Ascending aorta (tissue), 2 donors: ENCODE measurements at regions of chr3 and their contacts with region 1.

Region 1: DNA sequence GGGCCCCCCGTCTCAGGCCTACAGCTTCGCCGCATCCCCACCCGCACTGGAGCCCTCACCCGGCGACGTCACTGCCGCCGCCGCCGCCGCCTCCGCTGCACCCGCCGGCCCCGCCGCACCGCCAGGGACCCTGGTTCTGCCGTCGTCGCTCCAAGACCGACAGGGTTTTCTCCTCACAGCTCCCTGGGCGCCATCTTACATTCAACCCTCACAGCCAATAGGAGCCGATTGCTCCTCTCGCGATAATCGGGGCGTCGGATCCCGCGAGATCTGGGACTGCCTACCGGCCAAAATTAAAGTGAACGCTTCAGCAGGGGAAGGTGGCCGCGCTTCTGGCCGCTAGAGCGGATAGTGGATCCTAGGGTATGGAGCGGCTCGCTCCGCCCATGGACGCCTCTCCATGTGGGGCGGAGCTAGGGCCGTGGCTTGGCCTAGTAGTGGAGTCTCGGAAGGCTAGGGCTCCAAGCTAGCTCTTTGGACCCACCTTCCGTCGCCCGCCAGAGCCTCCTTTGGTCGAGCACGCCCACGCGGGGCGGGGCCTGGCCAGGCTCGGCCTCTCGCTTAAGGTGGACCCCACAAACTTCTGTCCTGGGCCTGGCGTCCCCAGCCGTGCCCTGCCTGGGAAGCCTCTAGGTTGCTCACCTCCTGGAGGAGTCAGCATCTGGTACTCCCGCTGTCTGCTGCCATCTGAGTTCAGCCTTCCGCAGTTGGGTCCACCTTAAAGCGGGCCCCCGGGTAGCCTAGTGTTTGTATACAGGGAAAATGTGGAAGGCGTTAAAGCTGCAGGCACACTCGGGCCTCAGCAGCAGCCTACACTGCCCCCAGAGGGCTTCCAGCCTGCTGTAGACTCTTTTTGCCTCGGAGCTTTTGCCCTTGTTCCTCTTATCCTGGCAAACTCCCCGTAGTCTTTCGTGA is at the start of gene QRICH1:
- DNase-seq: peak; percentile 94 to 99
- H3K4me3 ChIP-seq: peak within 1 kb of the TSS; percentile 97 to 98
- H3K27ac ChIP-seq: peak within 1 kb of the TSS; percentile 94 to 97
- H3K4me1 ChIP-seq: peaks cover 0 to 26% of the 10 kb centered on the region in 2 donors
- H3K27me3 ChIP-seq: no peaks in the 10 kb centered on the region
- CTCF ChIP-seq: peak; percentile 50 to 62 (median 60)
- total RNA-seq, gene QRICH1: 129 TPM

Region 2: DNA sequence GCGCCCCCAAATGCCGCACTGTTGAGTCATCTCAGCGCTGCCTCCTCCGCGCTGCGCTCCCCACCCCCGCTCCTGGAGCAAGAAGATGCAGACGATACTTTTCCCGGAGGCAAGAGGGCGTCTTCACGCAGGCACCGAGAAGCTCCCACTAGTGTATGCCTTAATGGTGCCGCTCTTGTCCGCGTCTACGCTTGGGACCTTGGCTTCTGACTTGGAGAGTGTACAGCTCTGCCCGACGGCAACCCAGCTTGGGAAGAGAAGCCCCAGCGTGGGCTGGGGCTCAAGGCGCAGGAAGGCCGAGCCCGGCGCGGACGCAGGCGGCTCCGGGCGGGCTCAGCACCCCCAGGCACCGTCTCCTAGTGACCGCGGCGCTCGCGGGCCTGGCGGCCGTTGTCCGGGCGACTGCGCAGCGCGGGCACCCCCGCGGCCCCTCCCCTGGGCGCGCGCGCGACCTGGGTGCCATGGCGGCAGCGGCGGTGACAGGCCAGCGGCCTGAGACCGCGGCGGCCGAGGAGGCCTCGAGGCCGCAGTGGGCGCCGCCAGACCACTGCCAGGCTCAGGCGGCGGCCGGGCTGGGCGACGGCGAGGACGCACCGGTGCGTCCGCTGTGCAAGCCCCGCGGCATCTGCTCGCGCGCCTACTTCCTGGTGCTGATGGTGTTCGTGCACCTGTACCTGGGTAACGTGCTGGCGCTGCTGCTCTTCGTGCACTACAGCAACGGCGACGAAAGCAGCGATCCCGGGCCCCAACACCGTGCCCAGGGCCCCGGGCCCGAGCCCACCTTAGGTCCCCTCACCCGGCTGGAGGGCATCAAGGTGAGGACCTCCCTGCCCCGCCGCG is 104.1 kb before region 1 on chr3 and contains the start of gene P4HTM:
- intact Hi-C with region 1: loop called (anchors 2 kb)
- DNase-seq: peak; percentile 46 to 96
- H3K4me3 ChIP-seq: peak within 1 kb of the TSS; percentile 80 to 99
- H3K27ac ChIP-seq: peak within 1 kb of the TSS; percentile 92 to 97
- H3K4me1 ChIP-seq: peaks cover 10 to 26% of the 10 kb centered on the region in 2 donors
- H3K27me3 ChIP-seq: no peaks in the 10 kb centered on the region
- CTCF ChIP-seq: peak in 2 of 3 experiments; percentile 35 to 45
- total RNA-seq, gene P4HTM: 71.9 TPM

Region 3: GRCh38 chr3:49028673-49029562 is 65.2 kb before region 1 on chr3 and contains the start of gene IMPDH2:
- intact Hi-C with region 1: loop called (anchors 2 kb)
- DNase-seq: peak; percentile 68 to 96
- H3K4me3 ChIP-seq: peak within 1 kb of the TSS; percentile 59 to 76
- H3K27ac ChIP-seq: peak within 1 kb of the TSS; percentile 92 to 96
- H3K4me1 ChIP-seq: peaks cover 0 to 8% of the 10 kb centered on the region in 2 donors
- H3K27me3 ChIP-seq: no peaks in the 10 kb centered on the region
- CTCF ChIP-seq: no peak
- total RNA-seq, gene IMPDH2: 101 TPM

Region 4: DNA sequence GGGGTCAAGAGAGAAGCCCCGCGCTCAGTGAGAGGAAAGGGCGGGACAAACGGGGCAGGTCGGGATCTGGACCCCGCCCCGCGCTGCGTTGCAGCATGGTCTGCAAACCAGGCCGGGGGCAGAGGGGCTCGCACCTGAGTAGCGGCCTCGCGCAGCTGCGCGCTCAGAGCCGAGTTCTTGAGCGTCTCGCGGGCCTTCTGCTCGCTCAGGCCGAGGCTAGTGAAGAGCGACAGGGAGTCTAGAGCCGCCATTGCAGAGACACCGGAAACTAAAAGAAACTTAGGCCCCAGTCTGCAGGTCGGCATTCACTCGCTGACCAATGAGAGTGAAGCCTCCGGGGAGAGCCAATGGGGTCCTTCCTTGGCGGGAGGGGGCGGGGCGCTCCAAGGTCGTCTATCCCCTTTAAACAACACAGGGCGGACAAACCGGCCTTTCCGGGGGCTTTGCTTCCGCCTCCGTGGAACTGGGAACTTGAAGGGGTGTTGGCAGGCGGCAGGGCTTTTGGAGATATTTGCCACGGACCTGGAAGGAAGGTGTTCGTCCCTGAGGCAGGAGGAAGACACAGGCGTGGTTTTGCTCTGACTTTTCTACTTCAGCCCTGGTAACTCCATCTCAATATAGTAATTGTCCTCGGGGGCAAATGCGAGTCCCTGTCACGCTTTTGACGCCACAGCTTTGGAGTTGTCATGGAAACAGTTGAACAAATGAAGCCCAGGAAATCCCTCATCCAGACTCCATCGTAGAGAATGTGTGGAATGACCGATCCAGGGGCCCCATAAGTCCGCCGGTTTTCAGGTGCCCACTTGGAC is 10.6 kb after region 1 on chr3 and contains the start of gene QARS1:
- intact Hi-C with region 1: loop called (anchors 1 kb)
- DNase-seq: peak; percentile 85 to 96
- H3K4me3 ChIP-seq: peak within 1 kb of the TSS; percentile 91 to 99
- H3K27ac ChIP-seq: peak within 1 kb of the TSS; percentile 76 to 84
- H3K4me1 ChIP-seq: peaks cover 16 to 20% of the 10 kb centered on the region in 2 donors
- H3K27me3 ChIP-seq: no peaks in the 10 kb centered on the region
- CTCF ChIP-seq: no peak
- total RNA-seq, gene QARS1: 588 TPM

Region 5: DNA sequence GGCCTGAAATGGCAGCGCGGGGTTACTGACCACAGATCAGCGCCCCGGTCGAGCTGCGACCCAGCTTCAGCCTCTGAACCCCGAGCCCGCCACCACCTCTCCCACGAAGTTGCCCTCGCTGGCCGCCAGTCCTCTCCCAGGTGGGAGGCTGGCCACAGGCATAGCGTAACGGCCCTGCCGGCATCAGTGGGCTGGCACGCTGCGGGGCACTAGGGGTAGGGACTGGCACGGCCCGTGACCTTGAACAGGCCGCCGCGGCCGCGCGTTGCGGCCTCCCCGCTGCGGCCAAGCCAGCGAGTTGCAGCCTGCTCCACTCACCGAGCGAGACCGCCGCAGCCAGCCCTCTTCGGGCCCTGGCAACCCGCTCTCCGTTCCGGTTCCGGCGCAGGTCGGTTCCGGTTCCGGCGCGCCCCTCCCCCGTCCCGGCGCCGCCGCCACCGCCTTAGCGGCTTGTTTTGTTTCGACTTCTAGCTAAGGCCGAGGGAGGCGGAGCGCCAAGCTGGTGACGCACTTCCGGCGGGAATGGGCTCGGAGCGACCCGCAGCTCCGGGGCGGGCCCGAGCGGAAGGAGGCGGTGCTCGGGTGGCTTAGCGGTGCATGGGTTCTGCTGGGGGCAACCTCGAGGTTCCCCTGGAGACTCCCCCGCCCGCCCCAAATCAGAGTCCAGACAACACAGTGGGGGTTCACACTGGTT is 26.5 kb after region 1 on chr3 and contains the start of gene USP19:
- intact Hi-C with region 1: loop called (anchors 1 kb)
- DNase-seq: peak; percentile 81 to 98
- H3K4me3 ChIP-seq: peak within 1 kb of the TSS; percentile 92
- H3K27ac ChIP-seq: peak within 1 kb of the TSS; percentile 92 to 96
- H3K4me1 ChIP-seq: peaks cover 15 to 19% of the 10 kb centered on the region in 2 donors
- H3K27me3 ChIP-seq: no peaks in the 10 kb centered on the region
- CTCF ChIP-seq: no peak
- total RNA-seq, gene USP19: 37.8 TPM

Region 6: DNA sequence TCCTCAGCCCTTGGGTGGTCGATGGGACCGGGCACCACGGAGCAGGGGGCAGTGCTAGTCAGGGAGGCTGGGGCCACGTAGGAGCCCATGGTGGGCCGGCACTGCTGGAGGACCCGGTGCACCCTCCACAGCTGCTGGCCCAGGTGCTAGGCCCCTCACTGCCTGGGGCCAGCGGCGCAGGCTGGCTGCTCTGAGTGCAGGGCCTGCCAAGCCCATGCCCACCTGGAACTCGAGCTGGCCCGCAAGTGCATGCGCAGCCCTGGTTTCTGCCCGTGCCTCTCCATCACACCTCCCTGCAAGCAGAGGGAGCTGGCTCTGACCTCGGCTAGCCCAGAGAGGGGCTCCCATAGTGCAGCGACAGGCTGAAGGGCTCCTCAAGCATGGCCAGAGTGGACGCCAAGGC is 119.4 kb after region 1 on chr3:
- intact Hi-C with region 1: no loop called
- DNase-seq: no peak
- H3K4me3 ChIP-seq: no peak overlapping the region
- H3K27ac ChIP-seq: no peak overlapping the region
- H3K4me1 ChIP-seq: peaks cover 4 to 8% of the 10 kb centered on the region in 2 donors
- H3K27me3 ChIP-seq: no peaks in the 10 kb centered on the region
- CTCF ChIP-seq: no peak